ENCODE measurements at regions of chr13 and their contacts with region 1.

Region 1: DNA sequence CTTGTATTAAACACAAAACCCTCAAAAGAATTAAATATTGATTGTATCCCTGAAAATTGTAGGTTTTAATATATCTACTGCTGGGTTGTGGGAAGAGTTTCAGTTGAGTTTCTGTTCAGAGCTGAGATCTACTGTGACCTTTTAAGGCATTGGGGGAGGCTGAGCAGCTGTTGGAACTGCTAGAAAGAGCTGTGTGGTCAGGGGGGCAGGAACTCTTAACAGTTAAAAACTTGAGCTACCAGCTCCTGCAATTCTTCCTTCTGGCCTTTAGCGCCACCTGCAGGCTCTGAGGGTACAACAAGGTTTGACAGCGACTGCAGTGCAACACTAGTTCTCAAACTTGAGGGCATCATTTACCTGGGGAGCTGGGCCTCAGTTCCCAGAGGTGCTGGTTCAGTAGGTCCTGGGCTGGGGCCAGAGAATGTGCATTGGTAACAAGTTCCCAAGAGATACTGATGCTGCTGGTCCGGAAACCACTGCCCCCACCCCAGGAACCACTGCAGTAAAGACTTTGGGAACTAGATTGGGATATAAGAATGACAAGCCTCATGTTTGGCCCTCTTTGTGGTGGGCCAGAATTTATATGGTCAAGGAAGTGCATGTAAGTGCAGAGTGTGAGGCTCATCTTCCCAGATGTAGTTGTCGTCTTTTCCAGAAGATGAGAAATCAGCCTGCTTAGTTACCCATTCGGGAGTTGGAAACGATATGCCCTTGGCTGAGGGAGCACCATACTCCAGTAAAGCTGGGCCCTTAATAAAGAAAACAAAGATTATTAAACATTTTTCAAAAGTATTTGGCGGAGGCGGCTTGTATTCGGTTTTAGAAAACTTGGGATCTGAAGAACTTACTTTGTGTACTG is 2.6 kb downstream of the RNASEH2B start:
- DNase-seq: peak; percentile 68
- ATAC-seq: no peak
- H3K4me3 ChIP-seq: no peak overlapping the region
- H3K27ac ChIP-seq: no peak overlapping the region
- H3K4me1 ChIP-seq: peaks cover 28% of the 10 kb centered on the region
- H3K27me3 ChIP-seq: no peaks in the 10 kb centered on the region
- CTCF ChIP-seq: peak; percentile 88
- EP300 ChIP-seq: peak in 1 of 2 experiments; percentile 35; a peak in 1 of 4 replicates
- POLR2A ChIP-seq: no peak
- RAD21 ChIP-seq: no peak

Region 2: DNA sequence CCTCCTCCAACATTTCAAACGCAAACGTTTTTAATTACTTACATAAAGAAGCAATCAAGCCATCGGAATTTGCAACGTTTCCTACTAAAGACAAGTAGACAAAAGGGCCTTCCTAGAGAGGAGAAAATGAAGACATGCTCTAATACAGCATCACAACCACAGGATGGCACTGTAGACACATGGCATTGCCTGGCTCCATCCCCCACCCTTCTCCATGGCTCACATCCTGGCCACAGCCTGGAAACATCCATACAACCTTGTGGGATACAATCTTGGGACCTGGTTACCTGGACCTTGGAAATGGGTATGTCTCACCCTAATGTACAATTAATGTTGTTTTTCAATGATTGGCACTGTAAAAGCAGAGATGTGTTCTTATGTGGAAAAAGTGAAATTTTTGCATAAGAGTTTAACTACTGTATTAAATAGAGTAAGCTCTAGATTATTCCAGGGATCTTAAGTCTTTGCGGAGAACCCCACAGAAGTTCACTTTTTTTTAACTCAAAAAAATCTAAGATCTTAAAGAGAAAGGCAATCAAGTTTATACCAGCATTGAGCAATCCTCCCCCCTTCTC is 1242.3 kb before region 1 on chr13:
- CTCF ChIA-PET with region 1: no interaction called
- POLR2A ChIA-PET with region 1: no interaction called
- in situ Hi-C with region 1: loop called (anchors 25 kb)
- intact Hi-C with region 1: no loop called
- DNase-seq: peak; percentile 60
- ATAC-seq: peak; percentile 96
- H3K4me3 ChIP-seq: no peak overlapping the region
- H3K27ac ChIP-seq: no peak overlapping the region
- H3K4me1 ChIP-seq: no peaks in the 10 kb centered on the region
- H3K27me3 ChIP-seq: no peaks in the 10 kb centered on the region
- CTCF ChIP-seq: peak; percentile 81
- EP300 ChIP-seq: no peak
- POLR2A ChIP-seq: no peak
- RAD21 ChIP-seq: peak; percentile 84

Region 3: GRCh38 chr13:49976314-49977258 is 935.6 kb before region 1 on chr13:
- CTCF ChIA-PET with region 1: no interaction called
- POLR2A ChIA-PET with region 1: interaction called, 3 read pairs
- in situ Hi-C with region 1: loop called (anchors 10 kb)
- intact Hi-C with region 1: loop called (anchors 2 kb)
- DNase-seq: peak; percentile 65
- ATAC-seq: peak; percentile 87
- H3K4me3 ChIP-seq: peak overlapping the region in 1 of 3 experiments; percentile 4; a peak in 1 of 6 replicates
- H3K27ac ChIP-seq: no peak overlapping the region
- H3K4me1 ChIP-seq: peaks cover 24% of the 10 kb centered on the region
- H3K27me3 ChIP-seq: no peaks in the 10 kb centered on the region
- CTCF ChIP-seq: peak; percentile 94
- EP300 ChIP-seq: no peak
- POLR2A ChIP-seq: no peak
- RAD21 ChIP-seq: peak; percentile 81

Region 4: GRCh38 chr13:50512474-50513299 is 399.5 kb before region 1 on chr13:
- CTCF ChIA-PET with region 1: no interaction called
- POLR2A ChIA-PET with region 1: no interaction called
- in situ Hi-C with region 1: no loop called
- intact Hi-C with region 1: loop called (anchors 1 kb)
- DNase-seq: peak; percentile 47
- ATAC-seq: peak; percentile 93
- H3K4me3 ChIP-seq: peak overlapping the region; percentile 36 to 71 (median 62)
- H3K27ac ChIP-seq: peak overlapping the region; percentile 76
- H3K4me1 ChIP-seq: peaks cover 63% of the 10 kb centered on the region
- H3K27me3 ChIP-seq: no peaks in the 10 kb centered on the region
- CTCF ChIP-seq: no peak
- EP300 ChIP-seq: no peak
- POLR2A ChIP-seq: no peak
- RAD21 ChIP-seq: no peak

Region 5: GRCh38 chr13:50810998-50811397 is 101.2 kb before region 1 on chr13:
- CTCF ChIA-PET with region 1: no interaction called
- POLR2A ChIA-PET with region 1: no interaction called
- in situ Hi-C with region 1: no loop called
- intact Hi-C with region 1: no loop called
- DNase-seq: no peak
- ATAC-seq: no peak
- H3K4me3 ChIP-seq: no peak overlapping the region
- H3K27ac ChIP-seq: no peak overlapping the region
- H3K4me1 ChIP-seq: no peaks in the 10 kb centered on the region; the same call in 1 of the 2 replicates
- H3K27me3 ChIP-seq: no peaks in the 10 kb centered on the region
- CTCF ChIP-seq: no peak
- EP300 ChIP-seq: no peak
- POLR2A ChIP-seq: no peak
- RAD21 ChIP-seq: no peak

Region 6: DNA sequence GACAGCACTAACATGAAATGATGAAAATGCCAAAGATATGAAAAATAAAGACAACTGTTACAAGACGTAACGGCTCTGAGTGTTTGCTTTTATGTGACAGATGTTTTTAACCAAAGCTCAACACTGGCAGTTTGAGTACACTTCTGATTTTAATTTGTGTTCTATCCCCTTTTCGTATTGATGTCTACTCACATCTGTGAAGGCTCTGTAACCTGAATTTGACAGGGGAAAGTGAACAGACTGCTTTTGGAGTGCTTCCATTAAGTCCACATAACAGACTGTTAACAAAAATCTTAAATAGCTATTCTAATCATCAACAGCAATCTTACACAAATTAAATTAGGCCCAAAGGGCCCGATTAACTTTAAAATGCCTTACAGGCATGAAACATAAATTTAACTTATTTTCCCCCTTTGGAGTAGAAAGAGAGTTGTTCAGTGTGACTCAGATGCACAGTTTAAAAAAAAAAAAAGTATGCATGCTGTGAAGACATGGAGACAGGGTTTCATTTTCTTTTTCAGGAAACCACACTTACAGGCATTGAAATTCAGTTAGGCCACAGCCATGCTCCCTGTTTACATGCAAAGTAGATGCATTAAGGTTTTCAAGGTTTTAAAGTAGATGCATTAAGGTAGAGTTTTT is 18.8 kb before region 1 on chr13:
- CTCF ChIA-PET with region 1: no interaction called
- POLR2A ChIA-PET with region 1: no interaction called
- in situ Hi-C with region 1: no loop called
- intact Hi-C with region 1: no loop called
- DNase-seq: no peak
- ATAC-seq: no peak
- H3K4me3 ChIP-seq: no peak overlapping the region
- H3K27ac ChIP-seq: no peak overlapping the region
- H3K4me1 ChIP-seq: 0 out of 2 replicates have a peak, but pooled peaks cover 5% of the 10 kb centered on the region
- H3K27me3 ChIP-seq: no peaks in the 10 kb centered on the region; a peak in 2 of 5 replicates
- CTCF ChIP-seq: no peak
- EP300 ChIP-seq: no peak
- POLR2A ChIP-seq: no peak
- RAD21 ChIP-seq: no peak

Region 7: DNA sequence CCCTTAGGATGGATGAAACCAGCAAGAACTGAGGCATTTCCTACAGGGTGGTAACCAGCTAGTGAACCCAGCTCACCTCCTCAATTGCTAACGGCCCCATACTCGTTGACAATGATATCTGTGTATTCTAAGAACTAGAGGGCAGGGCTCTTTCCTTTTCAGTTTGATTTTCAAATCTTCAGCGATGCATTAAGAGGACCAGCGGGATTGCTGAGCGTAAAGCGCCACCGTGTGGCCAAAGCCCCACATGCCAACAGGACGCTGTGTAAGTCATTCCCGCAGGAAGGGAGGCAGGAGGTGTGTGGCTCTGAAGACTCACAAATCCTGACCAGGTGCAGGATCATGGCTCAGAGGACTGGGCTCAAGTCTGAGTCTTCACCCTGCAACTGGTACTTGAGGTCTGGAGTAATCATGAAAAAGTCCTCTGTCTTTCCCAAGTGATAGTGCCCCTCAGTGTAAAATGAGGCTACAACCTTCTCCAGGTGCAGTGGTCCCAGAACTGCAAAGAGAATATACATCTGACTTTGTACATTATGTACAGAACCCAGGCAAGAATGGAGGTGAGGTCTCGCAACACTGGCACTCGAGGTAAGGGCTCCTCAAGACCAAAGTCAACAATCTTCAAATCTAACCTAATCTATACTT is 158.0 kb after region 1 on chr13:
- CTCF ChIA-PET with region 1: interaction called, 4 read pairs
- POLR2A ChIA-PET with region 1: no interaction called
- in situ Hi-C with region 1: no loop called
- intact Hi-C with region 1: loop called (anchors 2 kb)
- DNase-seq: peak; percentile 44
- ATAC-seq: peak; percentile 95
- H3K4me3 ChIP-seq: no peak overlapping the region
- H3K27ac ChIP-seq: no peak overlapping the region
- H3K4me1 ChIP-seq: peaks cover 10% of the 10 kb centered on the region
- H3K27me3 ChIP-seq: peaks cover 0 to 21% of the 10 kb centered on the region in 2 experiments; a peak in 4 of 5 replicates
- CTCF ChIP-seq: peak; percentile 95
- EP300 ChIP-seq: no peak
- POLR2A ChIP-seq: no peak
- RAD21 ChIP-seq: peak; percentile 91